ENCODE measurements at regions of chr2 and their contacts with region 1.

Region 1: GRCh38 chr2:235135990-235136561 is 184.3 kb downstream of the SH3BP4 start:
- DNase-seq: peak; percentile 78
- H3K4me3 ChIP-seq: no peak overlapping the region; a peak in 1 of 4 replicates
- H3K27ac ChIP-seq: no peak overlapping the region
- H3K4me1 ChIP-seq: no peaks in the 10 kb centered on the region
- H3K27me3 ChIP-seq: no peaks in the 10 kb centered on the region; the same call in 1 of the 2 replicates
- CTCF ChIP-seq: peak; percentile 74
- EP300 ChIP-seq: no peak
- RAD21 ChIP-seq: peak; percentile 84

Region 2: DNA sequence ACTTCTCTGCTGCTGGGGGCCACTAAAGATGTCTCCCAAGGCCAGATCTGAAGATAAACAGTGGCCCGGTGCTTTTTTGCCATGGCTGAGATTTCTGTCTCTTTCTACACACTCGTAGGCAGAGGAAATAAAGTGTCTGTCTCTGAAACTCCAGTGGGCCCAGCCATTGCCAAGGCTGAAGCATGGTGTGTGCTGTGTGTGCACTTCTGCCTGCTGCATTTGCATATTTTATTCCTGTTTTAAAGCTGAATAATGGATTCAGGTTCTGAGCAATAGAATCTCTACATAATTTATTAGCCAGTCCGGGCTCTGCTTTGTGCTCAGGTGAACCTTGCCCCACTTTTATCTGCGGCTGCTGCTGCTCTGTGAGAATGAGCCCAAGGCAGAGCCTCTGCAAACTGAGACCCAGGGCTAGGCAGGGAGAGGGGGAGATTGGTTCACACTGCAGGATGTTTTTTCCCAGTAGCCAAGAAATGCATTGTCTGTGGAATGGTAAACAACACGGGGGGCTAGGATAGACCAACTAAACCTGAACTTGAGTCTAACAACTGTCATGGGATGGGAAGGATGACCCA is 248.9 kb before region 1 on chr2:
- CTCF ChIA-PET with region 1: no interaction called
- POLR2A ChIA-PET with region 1: no interaction called
- DNase-seq: no peak
- H3K4me3 ChIP-seq: no peak overlapping the region
- H3K27ac ChIP-seq: no peak overlapping the region
- H3K4me1 ChIP-seq: peaks cover 0 to 4% of the 10 kb centered on the region in 2 experiments; a peak in 1 of 4 replicates
- H3K27me3 ChIP-seq: no peaks in the 10 kb centered on the region
- CTCF ChIP-seq: no peak
- EP300 ChIP-seq: no peak
- RAD21 ChIP-seq: no peak

Region 3: DNA sequence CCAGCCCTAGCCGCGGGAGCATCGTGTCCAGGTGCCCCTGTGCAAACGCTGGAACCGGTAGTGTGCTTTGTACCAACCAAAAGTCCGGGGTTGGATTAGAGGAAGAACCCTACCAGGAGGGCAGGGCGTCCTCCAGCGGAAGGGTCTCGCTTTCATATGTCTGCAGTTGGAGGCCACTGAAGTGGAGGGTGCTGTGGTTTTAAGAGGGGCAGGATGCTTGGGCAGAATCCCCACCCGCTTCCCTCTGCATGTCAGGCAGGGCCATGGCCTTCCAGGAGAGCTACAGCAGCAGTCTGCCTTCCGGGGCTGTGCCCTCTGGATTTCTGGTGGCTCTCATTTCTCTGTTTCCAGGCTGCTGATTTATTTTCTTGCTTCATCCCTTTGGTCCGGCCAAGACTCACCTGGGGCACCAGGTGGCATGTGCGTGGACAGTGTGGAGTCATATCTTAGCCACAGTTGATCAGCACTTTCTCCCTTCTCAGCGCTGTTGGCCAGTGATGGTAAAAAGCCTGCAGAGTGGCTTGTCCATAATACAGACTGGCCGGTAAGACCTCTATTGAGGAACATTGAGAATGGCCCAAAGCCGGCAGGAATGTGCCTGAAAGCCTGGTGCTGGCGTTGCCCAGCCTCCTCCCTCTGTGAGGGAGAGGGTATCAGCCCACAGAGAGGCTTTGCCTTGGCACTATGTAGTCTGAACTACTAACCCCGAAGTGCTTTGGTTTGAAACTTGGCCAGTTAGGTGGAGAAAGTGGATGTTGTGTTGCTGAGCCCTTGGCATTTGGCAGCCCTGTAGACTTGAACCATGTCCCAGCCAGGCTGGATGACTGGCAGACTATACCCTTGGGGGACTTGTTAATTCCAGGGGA is 359.5 kb after region 1 on chr2:
- CTCF ChIA-PET with region 1: interaction called, 21 read pairs
- POLR2A ChIA-PET with region 1: no interaction called
- DNase-seq: no peak
- H3K4me3 ChIP-seq: peak overlapping the region; percentile 72 to 77
- H3K27ac ChIP-seq: no peak overlapping the region
- H3K4me1 ChIP-seq: peaks cover 13 to 28% of the 10 kb centered on the region in 2 experiments; a peak in 2 of 4 replicates
- H3K27me3 ChIP-seq: no peaks in the 10 kb centered on the region
- CTCF ChIP-seq: no peak
- EP300 ChIP-seq: no peak
- RAD21 ChIP-seq: no peak

Measured in SK-N-SH (cell line).